ENCODE measurements at regions of chr10 and their contacts with region 1.

Region 1: GRCh38 chr10:31864834-31865518 is 63.7 kb downstream of the ARHGAP12 start:
- DNase-seq: peak; percentile 85
- H3K4me3 ChIP-seq: peak overlapping the region in 1 of 3 experiments; percentile 60
- H3K27ac ChIP-seq: peak overlapping the region; percentile 29
- H3K4me1 ChIP-seq: peaks cover 22% of the 10 kb centered on the region
- H3K27me3 ChIP-seq: no peaks in the 10 kb centered on the region
- CTCF ChIP-seq: no peak
- POLR2A ChIP-seq: no peak

Region 2: GRCh38 chr10:31792745-31793144 is 72.2 kb before region 1 on chr10:
- CTCF ChIA-PET with region 1: no interaction called
- POLR2A ChIA-PET with region 1: no interaction called
- dilution Hi-C with region 1: no loop called
- intact Hi-C with region 1: no loop called
- DNase-seq: no peak
- H3K4me3 ChIP-seq: no peak overlapping the region
- H3K27ac ChIP-seq: no peak overlapping the region
- H3K4me1 ChIP-seq: no peaks in the 10 kb centered on the region
- H3K27me3 ChIP-seq: no peaks in the 10 kb centered on the region
- CTCF ChIP-seq: no peak
- POLR2A ChIP-seq: no peak

Region 3: DNA sequence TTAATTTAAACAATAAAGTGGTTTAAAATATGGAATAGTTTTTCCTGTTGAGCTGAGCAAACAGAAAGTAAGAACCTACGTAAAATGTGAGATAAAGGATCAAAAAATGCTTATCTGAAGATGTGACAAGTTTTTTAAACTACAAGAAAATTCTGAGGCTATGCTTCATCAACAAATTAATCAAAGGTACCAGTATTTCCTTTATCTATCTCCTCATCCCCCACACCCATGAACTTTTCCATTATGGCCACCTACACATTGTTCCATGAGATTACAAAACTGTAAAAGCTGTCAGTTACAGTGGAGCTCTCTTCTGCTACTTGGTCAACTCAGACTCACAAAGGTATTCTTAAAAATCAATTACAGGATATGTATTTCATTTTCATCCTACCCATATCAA is 13.8 kb before region 1 on chr10:
- CTCF ChIA-PET with region 1: interaction called, 22 read pairs
- POLR2A ChIA-PET with region 1: no interaction called
- dilution Hi-C with region 1: no loop called
- intact Hi-C with region 1: no loop called
- DNase-seq: no peak
- H3K4me3 ChIP-seq: no peak overlapping the region
- H3K27ac ChIP-seq: no peak overlapping the region
- H3K4me1 ChIP-seq: no peaks in the 10 kb centered on the region
- H3K27me3 ChIP-seq: no peaks in the 10 kb centered on the region
- CTCF ChIP-seq: no peak
- POLR2A ChIP-seq: no peak

Region 4: DNA sequence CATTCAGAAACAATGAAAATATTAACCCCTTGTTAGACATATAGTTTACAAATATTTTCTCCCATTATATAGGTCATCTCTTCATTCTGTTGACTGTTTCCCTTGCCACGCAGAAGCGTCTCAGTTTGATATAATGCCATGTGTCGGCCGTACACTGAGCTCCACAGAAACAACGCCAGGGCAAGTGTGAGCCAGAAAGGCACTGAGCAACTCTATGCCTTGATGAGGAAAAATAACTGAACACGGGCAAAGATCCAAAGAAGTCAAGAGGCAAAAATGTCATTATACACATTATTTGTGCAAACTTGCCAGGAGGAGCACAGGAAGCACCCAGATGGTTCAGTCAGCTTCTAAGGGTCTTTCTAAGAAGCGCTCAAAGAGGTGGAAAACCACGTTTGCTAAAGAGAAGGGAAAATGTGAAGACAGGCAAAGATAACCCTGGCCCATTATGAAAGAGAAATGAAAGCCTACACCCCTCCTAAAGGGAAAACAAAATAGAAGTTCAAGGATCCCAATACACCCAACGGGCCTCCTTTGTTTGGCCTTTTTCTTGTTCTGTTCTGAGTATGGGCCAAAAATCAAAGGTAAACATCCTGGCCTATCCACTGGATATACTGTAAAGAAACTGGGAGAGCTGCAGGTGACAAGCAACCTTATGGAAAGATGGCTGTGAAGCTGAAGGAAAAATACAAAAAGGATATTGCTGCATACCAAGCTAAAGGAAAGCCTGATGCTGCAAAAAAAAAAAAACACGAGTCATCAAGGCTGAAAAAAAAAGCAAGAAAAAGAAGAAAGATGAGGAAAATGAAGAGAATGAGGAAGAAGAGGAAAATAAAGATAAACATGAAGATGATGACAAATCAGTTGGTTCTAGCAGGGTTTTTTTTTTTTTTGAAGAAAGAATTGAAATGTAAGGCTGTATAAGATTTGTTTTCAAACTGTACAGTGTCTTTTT is 48.2 kb after region 1 on chr10:
- CTCF ChIA-PET with region 1: interaction called, 10 read pairs
- POLR2A ChIA-PET with region 1: no interaction called
- dilution Hi-C with region 1: no loop called
- intact Hi-C with region 1: no loop called
- DNase-seq: peak; percentile 57
- H3K4me3 ChIP-seq: no peak overlapping the region
- H3K27ac ChIP-seq: no peak overlapping the region
- H3K4me1 ChIP-seq: peaks cover 7% of the 10 kb centered on the region
- H3K27me3 ChIP-seq: no peaks in the 10 kb centered on the region
- CTCF ChIP-seq: no peak
- POLR2A ChIP-seq: no peak

Region 5: DNA sequence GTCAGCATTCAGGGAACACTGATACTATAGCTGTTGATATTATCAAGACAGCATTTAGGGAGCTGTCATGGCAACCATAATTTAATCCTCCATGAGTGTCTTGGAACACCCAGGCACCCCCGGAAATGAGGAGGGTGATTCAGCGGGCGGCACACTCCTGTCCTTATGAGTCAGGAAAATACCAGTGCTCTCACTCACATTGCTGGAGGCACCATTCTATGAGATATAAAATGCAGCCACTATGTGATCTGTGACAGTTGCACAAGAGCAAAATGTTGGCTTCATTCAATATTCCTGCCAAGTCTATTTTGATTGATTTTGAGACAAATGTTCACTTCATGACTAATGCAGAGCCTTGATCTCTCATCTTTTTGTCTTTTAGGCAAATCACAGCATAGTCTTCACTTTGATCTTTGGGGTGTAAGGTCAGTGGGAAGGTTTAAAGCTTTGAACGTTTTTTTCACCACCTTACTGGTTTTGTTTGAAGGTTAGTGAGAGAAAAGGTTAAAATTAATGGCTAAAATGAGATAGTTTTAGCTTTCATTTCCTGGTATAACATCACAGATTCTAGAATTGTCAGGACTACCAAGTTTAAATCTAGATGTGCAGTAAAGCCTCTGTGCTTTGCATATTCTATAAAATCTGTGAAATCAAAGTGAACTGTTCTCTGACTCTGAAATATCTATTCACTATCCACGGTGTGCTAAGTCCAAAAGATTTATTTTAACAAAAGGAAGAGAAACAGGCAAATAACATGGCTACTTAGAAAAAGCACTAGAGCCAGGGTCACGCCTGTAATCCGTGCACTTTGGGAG is 76.1 kb after region 1 on chr10:
- CTCF ChIA-PET with region 1: interaction called, 104 read pairs
- POLR2A ChIA-PET with region 1: no interaction called
- dilution Hi-C with region 1: no loop called
- intact Hi-C with region 1: no loop called
- DNase-seq: peak; percentile 78
- H3K4me3 ChIP-seq: no peak overlapping the region
- H3K27ac ChIP-seq: peak overlapping the region; percentile 77
- H3K4me1 ChIP-seq: peaks cover 35% of the 10 kb centered on the region
- H3K27me3 ChIP-seq: no peaks in the 10 kb centered on the region
- CTCF ChIP-seq: no peak
- POLR2A ChIP-seq: no peak

Region 6: DNA sequence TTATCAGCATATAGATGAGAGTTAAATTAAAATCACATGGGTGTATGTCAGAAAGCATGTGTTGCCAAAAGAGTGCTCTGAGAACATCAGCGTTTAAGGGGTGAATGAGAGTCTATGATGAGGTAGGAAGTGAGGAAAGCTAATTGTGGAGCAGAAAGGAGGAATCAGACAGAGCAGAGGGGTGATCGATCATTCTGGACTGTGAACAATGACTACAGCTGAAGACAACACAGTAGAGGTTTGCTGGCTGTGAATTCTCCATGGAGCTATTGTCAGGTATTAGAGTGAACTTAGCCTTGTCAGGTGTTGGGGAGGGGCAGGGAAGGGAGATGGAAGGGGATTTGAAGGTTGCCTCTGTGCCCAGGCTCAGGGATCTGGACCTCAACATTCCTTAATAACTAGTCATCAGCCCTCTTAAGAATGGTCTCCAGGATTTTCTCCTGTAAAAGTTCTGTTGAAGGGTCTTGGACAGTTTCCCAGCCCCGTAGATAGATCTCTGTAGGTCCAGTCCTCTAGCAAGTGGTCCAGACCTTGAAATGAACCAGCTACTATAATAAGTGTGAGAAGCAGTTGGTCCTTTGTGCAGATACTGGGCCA is 134.2 kb after region 1 on chr10:
- CTCF ChIA-PET with region 1: interaction called, 76 read pairs
- POLR2A ChIA-PET with region 1: no interaction called
- dilution Hi-C with region 1: no loop called
- intact Hi-C with region 1: no loop called
- DNase-seq: no peak
- H3K4me3 ChIP-seq: no peak overlapping the region
- H3K27ac ChIP-seq: no peak overlapping the region
- H3K4me1 ChIP-seq: no peaks in the 10 kb centered on the region
- H3K27me3 ChIP-seq: no peaks in the 10 kb centered on the region
- CTCF ChIP-seq: no peak
- POLR2A ChIP-seq: no peak

Region 7: GRCh38 chr10:32207544-32207943 is 342.6 kb after region 1 on chr10:
- CTCF ChIA-PET with region 1: interaction called, 15 read pairs
- POLR2A ChIA-PET with region 1: no interaction called
- dilution Hi-C with region 1: no loop called
- intact Hi-C with region 1: loop called (anchors 2 kb)
- DNase-seq: peak; percentile 73
- H3K4me3 ChIP-seq: no peak overlapping the region
- H3K27ac ChIP-seq: no peak overlapping the region
- H3K4me1 ChIP-seq: peaks cover 22% of the 10 kb centered on the region
- H3K27me3 ChIP-seq: no peaks in the 10 kb centered on the region
- CTCF ChIP-seq: peak; percentile 68 to 79
- POLR2A ChIP-seq: no peak

Measured in endothelial cell of umbilical vein (primary cell).